Sigmoid colon (tissue), 7 donors: ENCODE measurements at regions of chr3 and their contacts with region 1.

Region 1: DNA sequence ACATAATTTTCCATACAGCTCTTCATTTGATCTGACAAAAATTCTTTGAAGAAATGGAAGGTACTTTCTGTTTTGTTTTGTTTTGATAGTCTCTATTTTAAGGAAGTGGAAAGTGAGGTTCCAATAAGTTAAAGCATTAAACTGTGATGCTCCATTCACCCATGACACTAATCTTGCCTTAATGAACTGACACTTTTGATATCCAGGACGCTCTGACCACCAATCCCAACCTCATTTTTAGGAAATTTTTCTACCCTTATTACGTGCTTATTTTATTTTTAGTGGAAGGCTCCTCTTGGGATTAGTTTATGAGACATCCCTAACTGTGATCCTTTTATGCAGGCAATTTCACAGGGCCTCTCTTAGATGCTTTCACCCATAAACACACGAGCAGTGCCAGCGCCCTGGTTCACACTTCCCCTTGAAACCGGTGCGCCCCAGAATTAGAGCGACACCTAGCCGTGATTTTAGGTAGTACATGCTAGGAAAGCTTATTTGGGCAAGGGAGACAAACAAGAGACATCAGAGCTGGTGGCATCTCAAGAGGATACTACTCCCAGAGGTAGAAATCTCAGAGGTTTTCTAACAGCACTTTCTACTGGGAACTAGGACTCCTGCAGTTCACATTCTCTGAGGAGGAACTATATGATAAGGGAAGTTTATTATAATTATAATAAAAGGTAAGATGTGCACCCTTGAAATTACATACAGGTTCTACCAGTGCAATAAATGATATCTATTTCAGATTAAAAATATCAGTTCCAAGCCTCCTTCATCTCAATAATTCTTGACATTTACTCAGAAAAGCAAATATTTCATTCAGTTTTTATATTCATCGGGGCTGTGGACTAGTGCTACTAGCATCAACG is 173.9 kb downstream of the SLC9A9 start:
- DNase-seq: peak; percentile 84
- H3K4me3 ChIP-seq: no peak overlapping the region
- H3K27ac ChIP-seq: no peak overlapping the region
- H3K4me1 ChIP-seq: peaks cover 0 to 3% (median 0%) of the 10 kb centered on the region in 4 donors
- H3K27me3 ChIP-seq: no peaks in the 10 kb centered on the region
- CTCF ChIP-seq: peak; percentile 26 to 90 (median 76)
- EP300 ChIP-seq: no peak
- POLR2A ChIP-seq: no peak

Region 2: GRCh38 chr3:143060906-143061305 is 613.4 kb before region 1 on chr3:
- intact Hi-C with region 1: loop called (anchors 10 kb)
- DNase-seq: no peak
- H3K4me3 ChIP-seq: no peak overlapping the region
- H3K27ac ChIP-seq: no peak overlapping the region
- H3K4me1 ChIP-seq: no peaks in the 10 kb centered on the region
- H3K27me3 ChIP-seq: no peaks in the 10 kb centered on the region
- CTCF ChIP-seq: no peak
- EP300 ChIP-seq: no peak
- POLR2A ChIP-seq: no peak

Region 3: DNA sequence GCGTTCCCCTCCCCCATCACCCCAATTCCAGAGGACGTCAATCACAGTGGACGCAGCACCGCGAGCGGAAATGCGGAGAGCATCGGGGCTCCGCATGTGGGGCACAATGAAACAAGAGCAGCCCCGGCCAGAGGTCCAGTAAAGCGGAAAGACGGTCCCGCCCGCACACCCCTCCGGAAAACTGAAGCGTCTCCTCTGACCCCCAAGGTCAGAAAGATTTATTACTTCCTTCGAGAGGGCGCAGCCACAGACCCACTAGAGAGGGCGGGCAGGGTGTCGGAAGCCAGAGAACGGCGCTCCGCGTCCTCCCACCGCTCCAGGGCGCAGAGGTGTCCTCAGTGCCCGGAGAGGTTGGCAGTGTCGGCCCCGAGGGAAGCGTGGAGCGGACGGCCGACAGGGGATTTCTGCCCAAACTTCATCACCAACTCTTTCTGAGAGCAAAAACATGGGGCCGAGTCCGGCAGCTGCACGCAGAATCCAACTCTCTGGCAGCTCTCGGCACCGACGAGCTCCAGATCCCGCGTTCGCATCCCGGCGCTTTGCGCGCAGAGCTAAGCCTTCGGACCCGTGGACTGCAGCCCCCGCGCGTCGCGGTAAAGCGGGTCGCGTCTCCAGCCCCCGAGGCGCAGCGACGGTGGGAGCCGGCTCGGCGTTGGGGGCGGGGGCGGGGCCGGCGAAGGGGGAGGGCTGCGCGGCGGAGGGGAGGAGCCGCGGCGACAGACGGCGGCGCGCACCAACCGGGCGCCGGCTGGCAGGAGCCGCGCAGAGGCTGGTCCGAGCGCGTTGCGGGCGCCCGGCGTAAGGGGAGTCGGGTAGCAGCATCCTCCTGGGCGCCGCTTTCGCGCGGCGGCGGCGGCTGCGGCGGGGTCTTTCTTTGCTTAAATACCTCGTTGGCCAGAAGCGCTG is 555.1 kb before region 1 on chr3 and contains the start of gene CHST2:
- intact Hi-C with region 1: no loop called
- DNase-seq: peak; percentile 67
- H3K4me3 ChIP-seq: peak within 1 kb of the TSS; percentile 52 to 71 (median 62)
- H3K27ac ChIP-seq: peak within 1 kb of the TSS; percentile 41 to 79 (median 69)
- H3K4me1 ChIP-seq: peaks cover 0 to 26% (median 19%) of the 10 kb centered on the region in 4 donors
- H3K27me3 ChIP-seq: peaks cover 10 to 34% (median 25%) of the 10 kb centered on the region in 3 donors
- CTCF ChIP-seq: no peak
- EP300 ChIP-seq: no peak
- POLR2A ChIP-seq: no peak
- total RNA-seq, gene CHST2: 1.8 to 4.4 (median 3.6) TPM

Region 4: DNA sequence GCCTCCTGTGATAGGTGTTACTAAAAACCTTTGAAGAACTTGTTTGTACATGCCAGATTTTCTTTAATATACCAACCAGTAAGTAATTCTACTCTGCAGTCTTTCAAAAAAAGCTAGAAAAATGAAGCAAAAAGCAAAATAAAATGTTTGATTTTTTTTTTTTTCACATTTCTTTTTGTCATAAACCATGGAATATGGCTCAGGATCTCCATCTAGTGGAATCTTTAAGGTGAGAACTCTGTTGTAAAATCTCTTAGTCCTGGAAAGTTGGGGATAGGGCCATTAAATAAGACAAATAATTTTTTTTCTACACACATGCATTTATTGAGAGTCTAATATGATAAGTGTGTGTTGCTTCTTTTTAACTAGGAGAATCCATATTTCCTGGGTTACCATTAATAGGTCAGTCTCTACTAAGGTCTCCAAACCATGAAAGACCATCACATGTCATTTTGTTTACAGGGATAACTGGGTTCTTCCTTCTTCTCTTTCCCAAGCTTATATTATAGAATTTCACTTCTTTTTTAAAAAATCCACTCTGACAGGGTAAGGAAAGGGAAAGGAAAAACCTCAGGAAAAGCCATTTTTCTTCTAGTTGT is 89.3 kb after region 1 on chr3:
- intact Hi-C with region 1: no loop called
- DNase-seq: no peak
- H3K4me3 ChIP-seq: no peak overlapping the region
- H3K27ac ChIP-seq: no peak overlapping the region
- H3K4me1 ChIP-seq: no peaks in the 10 kb centered on the region
- H3K27me3 ChIP-seq: no peaks in the 10 kb centered on the region
- CTCF ChIP-seq: no peak
- EP300 ChIP-seq: no peak
- POLR2A ChIP-seq: no peak